ENCODE measurements at regions of chr17 and their contacts with region 1.

Region 1: GRCh38 chr17:27654654-27655524 is 23.9 kb downstream of the LGALS9 start:
- DNase-seq: peak; percentile 91
- ATAC-seq: peak; percentile 92
- H3K4me3 Mint-ChIP-seq: no peak overlapping the region
- H3K27ac Mint-ChIP-seq: no peak overlapping the region
- H3K4me1 Mint-ChIP-seq: peaks cover 13% of the 10 kb centered on the region
- H3K27me3 Mint-ChIP-seq: no peaks in the 10 kb centered on the region; the same call in 1 of the 2 replicates
- CTCF ChIP-seq: peak; percentile 100

Region 2: DNA sequence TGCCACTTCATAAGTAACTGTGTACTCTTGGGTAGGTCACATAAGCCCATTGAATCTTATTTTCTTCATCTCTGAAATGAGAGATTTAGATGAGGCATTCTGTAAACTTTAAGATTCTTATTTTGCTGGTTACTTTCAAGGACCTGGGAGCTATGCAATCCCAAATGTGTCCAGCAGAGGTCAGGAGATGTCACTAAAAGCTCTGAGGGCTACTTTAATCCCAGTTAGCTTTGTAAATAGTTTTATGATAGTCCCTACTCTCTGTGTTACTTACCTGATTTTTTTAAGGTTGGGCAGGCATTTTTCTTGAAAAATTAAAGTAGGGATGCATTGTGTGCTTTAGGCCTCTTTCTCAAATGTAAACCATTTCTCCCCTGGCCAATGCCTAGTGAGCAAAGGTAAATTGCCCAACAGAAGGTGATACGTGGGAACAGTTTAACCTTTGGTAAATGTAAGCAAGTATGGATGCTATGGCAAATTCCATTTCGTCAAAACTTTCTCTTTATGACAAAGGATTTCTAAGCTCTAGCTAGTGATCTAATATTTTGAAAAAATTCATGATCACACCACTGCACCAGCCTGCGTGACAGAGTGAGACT is 418.1 kb before region 1 on chr17:
- CTCF ChIA-PET with region 1: interaction called, 18 read pairs
- POLR2A ChIA-PET with region 1: no interaction called
- DNase-seq: peak; percentile 71
- ATAC-seq: peak; percentile 53
- H3K4me3 Mint-ChIP-seq: no peak overlapping the region
- H3K27ac Mint-ChIP-seq: no peak overlapping the region
- H3K4me1 Mint-ChIP-seq: peaks cover 7% of the 10 kb centered on the region
- H3K27me3 Mint-ChIP-seq: peaks cover 3% of the 10 kb centered on the region; the same call in 1 of the 2 replicates
- CTCF ChIP-seq: peak; percentile 62

Region 3: DNA sequence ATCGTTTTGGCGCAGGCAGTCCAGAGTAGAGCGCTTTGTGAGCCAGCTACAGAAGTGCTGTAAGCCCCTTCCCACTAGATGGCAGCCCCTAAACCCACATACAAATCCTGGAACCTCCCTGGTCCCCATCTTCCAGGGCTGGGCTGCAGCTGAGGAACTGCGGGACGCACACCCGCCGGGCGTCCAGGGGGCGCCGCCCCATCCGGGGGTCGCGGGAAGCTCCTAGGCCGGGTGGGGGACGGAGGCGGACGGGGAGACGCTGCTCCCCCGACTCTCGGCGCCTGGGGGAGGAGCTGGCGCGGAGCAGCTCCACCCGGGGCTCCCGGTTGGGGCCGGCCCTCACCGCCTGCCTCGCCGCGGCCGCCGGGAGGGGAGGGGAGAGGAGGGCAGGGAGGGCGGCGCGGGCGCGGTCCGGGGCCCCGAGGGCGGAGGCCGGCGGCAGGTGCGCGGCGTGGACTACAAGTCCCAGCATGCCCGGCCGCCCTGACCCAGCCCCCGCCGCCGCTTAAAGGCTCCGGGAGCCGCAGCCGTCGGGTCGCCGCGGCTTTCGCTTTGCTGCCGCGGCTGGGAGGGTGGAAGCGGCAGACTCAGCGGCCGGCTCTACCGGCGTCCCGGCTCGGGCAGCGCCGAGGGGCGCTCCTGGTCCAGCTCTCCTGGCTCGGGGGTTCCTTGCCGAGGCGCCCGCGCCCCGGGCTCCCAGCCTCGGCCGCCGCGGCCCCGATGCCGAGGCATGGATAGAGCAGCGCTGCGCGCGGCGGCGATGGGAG is 198.8 kb before region 1 on chr17 and contains the start of gene KSR1:
- CTCF ChIA-PET with region 1: interaction called, 11 read pairs
- POLR2A ChIA-PET with region 1: no interaction called
- DNase-seq: peak; percentile 91
- ATAC-seq: peak; percentile 83
- H3K4me3 Mint-ChIP-seq: peak within 1 kb of the TSS; percentile 90
- H3K27ac Mint-ChIP-seq: peak within 1 kb of the TSS; percentile 89
- H3K4me1 Mint-ChIP-seq: peaks cover 43% of the 10 kb centered on the region
- H3K27me3 Mint-ChIP-seq: peaks cover 12% of the 10 kb centered on the region
- CTCF ChIP-seq: no peak
- total RNA-seq, gene KSR1: 38.0 to 45.5 TPM (median 39.7 TPM) in 3 replicates

Region 4: DNA sequence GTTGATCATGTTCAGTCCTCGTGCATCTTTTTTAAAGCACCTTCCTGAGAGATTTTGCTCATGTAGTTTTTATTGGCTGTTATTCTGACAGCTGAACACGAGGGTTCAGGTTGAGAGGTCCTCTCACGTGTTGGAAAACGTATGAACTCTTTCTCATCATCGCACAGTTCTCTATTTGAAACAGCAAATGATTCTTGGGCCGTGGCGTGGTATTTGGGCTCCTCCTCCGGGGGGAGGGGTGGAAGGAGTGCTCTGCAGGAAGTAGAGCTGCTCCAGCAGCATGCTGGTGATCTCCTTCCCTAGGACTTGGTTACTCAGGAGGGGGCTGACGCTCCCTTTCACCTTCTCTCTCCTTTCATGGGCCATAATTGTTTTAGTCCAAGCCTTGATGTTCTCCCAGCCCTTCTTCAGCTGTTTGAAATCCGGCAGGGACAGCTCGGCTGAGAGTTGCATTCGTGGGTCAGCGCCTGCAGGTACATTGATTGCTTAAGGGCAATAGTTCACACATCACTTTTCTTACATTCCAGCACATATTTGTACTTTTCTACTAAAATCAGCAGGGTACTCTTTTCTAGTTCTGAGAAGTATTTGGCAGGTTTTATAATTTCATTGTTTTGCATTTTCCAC is 128.2 kb before region 1 on chr17:
- CTCF ChIA-PET with region 1: no interaction called
- POLR2A ChIA-PET with region 1: no interaction called
- DNase-seq: peak; percentile 42
- ATAC-seq: peak; percentile 80
- H3K4me3 Mint-ChIP-seq: peak overlapping the region; percentile 22
- H3K27ac Mint-ChIP-seq: peak overlapping the region; percentile 84
- H3K4me1 Mint-ChIP-seq: peaks cover 81% of the 10 kb centered on the region
- H3K27me3 Mint-ChIP-seq: no peaks in the 10 kb centered on the region
- CTCF ChIP-seq: no peak

Region 5: DNA sequence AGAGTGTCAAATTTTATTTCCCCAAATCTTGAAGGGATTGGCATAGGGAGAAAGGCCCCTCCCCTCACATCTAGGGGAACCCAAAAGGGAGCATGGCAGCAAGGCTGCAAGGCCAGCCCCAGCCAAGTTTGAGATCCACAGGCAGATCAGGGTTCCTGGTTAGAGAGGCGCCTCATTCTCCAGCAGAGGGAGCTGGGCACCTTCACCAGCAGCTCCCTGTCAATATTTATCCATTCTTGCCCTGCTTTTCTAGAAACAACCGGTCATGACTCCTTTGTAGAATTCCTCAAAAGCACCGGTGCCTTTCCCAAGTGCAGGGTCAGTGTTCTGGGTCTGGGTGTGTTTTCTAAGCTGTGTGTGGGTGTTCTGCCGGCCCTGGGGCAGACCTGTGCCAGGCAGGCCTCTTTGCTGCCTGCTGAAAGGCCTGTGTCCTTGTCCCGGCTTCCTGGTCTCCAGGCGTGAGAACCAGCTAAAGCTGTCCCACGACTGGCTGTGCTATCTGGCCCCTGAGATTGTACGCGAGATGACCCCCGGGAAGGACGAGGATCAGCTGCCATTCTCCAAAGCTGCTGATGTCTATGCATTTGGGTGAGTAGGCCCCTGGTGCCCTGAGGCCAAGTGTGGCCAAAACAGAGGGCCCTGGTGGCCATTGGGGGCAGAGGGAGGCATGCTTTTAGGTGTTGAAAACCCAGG is 45.1 kb before region 1 on chr17:
- CTCF ChIA-PET with region 1: interaction called, 67 read pairs
- POLR2A ChIA-PET with region 1: no interaction called
- DNase-seq: peak; percentile 50
- ATAC-seq: peak; percentile 82
- H3K4me3 Mint-ChIP-seq: no peak overlapping the region
- H3K27ac Mint-ChIP-seq: peak overlapping the region; percentile 57
- H3K4me1 Mint-ChIP-seq: no peaks in the 10 kb centered on the region
- H3K27me3 Mint-ChIP-seq: no peaks in the 10 kb centered on the region
- CTCF ChIP-seq: peak; percentile 18; the same call in 1 of the 2 replicates

Region 6: DNA sequence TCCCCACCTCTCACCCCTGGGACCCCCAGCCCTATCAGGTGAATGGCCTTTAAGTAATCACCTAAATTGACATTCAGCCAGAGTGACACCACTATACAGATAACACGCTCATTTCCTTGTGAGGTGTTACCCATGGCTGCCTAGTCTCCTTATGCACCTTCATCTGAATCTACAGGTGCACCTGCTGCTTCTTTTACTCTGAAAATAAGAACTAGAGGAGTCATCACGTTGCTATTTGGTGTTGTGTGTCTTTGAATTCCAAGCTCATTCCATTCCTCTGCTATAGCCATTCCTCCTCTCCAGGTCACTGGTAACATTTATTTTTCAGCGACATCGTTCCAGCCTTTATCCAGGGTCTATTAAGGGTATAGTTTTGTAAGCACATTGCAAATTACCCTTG is 14.1 kb before region 1 on chr17:
- CTCF ChIA-PET with region 1: interaction called, 15 read pairs
- POLR2A ChIA-PET with region 1: no interaction called
- DNase-seq: no peak
- ATAC-seq: no peak
- H3K4me3 Mint-ChIP-seq: no peak overlapping the region
- H3K27ac Mint-ChIP-seq: no peak overlapping the region
- H3K4me1 Mint-ChIP-seq: peaks cover 10% of the 10 kb centered on the region
- H3K27me3 Mint-ChIP-seq: no peaks in the 10 kb centered on the region
- CTCF ChIP-seq: no peak

Region 7: DNA sequence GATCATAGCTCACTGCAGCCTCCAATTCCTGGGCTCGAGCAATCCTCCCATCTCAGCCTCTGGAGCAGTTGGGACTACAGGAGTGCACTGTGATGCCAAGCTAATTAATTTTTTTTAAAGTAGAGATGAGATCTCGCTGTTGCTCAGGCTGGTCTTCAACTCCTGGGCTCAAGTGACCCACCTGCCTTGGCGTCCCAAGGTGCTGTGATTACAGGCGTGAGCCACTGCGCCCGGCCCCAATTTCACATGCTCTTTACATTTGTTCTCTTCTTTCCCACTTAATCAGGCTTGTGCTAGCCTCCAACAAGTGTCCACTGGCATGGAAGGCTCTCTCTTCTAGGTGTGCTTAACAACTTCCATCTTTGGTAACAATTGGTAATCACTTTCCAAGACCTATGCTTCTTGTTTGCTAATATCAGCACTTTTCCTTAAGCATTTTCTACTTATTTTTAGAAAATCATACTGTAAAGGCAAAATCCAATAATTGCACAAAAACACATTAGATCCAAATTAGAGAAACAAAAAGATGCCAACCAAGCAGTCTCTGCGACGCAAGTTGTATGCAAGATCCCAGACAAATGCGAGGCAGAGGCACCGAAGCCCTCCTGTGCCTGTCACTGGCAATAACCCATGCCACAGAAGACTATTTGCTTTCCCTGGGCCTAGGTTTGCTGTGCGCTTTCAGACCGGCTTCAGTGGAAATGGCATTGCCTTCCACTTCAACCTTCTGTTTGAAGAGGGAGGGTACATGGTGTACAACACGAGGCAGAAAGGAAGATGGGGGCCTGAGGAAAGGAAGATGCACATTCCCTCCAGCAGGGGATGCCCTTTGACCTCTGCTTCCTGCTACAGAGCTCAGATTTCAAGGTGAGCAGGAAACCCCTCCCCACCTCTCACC is 92.8 kb after region 1 on chr17:
- CTCF ChIA-PET with region 1: interaction called, 25 read pairs
- POLR2A ChIA-PET with region 1: no interaction called
- DNase-seq: peak; percentile 78
- ATAC-seq: peak; percentile 92
- H3K4me3 Mint-ChIP-seq: no peak overlapping the region
- H3K27ac Mint-ChIP-seq: no peak overlapping the region
- H3K4me1 Mint-ChIP-seq: peaks cover 4% of the 10 kb centered on the region; the same call in 1 of the 2 replicates
- H3K27me3 Mint-ChIP-seq: no peaks in the 10 kb centered on the region
- CTCF ChIP-seq: peak; percentile 74

Region 8: DNA sequence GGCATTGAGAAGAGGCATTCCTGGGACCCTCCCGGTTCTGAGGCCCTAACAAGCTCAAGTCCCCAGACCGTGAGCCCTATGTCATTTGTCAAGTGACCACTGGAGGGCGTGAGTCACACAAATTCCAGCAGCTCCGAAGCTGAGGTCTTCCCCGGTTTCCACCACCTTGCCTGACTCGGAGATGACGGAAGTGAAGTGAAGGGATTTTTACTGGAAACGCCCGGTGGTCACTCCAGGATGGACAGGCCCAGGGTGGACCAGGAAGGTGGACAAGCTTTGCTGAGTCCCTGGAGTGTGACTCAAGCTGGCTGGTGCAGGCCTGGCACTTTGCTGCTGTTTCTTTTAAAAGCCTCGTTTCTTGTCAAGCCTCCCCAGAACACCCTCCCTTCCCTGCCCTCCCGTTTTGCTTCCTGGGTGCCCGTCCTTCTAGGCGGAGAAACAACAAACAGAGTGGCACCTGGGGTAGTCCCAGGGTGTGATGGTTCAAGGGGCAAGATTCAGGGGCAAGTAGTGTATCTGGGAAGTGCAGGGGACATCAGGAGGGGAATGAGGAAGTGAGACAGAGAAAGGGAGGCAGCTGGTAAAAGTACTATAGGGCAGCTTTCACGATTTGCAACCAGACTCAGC is 150.7 kb after region 1 on chr17:
- CTCF ChIA-PET with region 1: interaction called, 20 read pairs
- POLR2A ChIA-PET with region 1: no interaction called
- DNase-seq: peak; percentile 91
- ATAC-seq: peak; percentile 89
- H3K4me3 Mint-ChIP-seq: peak overlapping the region; percentile 51
- H3K27ac Mint-ChIP-seq: no peak overlapping the region
- H3K4me1 Mint-ChIP-seq: peaks cover 23% of the 10 kb centered on the region
- H3K27me3 Mint-ChIP-seq: no peaks in the 10 kb centered on the region
- CTCF ChIP-seq: peak; percentile 74

Measured in WTC11 (cell line).